ENCODE measurements at regions of chr1 and their contacts with region 1.

Region 1: DNA sequence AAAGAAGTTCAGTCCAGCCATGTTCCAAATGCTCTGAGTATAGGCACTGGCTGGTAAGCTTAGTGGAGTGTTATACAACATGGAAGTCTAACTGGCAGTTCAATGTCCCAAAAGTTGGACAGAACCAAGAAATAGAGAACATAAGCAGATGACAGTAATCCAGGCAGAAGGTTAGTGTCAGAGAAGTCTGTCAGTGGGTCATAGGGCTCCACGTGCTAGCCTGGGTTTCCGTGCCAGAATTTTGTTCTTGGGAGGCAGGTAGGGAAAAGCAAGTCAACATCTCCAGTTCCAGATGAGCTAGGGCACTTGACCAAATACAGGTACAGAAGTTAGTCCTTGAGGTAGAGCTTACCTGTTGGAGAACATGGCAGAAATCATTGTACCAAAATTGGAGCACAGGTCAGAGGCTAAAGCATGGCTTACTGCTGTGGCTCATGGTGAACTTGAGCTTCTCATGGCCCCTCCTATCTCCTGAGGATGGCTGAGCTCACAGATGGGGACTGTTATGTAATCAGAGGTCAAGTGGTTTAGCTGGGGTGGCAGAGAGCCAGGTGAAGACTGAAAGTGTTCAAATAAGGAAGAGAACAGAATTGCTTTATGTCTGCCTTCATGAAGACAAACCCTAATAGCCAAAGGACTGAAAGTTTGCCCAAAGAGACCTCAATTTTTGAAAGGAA is 170.8 kb downstream of the NFIA start:
- DNase-seq: peak; percentile 96
- H3K4me3 Mint-ChIP-seq: no peak overlapping the region
- H3K27ac Mint-ChIP-seq: peak overlapping the region; percentile 92
- H3K4me1 Mint-ChIP-seq: peaks cover 35% of the 10 kb centered on the region
- H3K27me3 Mint-ChIP-seq: no peaks in the 10 kb centered on the region
- CTCF ChIP-seq: no peak

Region 2: DNA sequence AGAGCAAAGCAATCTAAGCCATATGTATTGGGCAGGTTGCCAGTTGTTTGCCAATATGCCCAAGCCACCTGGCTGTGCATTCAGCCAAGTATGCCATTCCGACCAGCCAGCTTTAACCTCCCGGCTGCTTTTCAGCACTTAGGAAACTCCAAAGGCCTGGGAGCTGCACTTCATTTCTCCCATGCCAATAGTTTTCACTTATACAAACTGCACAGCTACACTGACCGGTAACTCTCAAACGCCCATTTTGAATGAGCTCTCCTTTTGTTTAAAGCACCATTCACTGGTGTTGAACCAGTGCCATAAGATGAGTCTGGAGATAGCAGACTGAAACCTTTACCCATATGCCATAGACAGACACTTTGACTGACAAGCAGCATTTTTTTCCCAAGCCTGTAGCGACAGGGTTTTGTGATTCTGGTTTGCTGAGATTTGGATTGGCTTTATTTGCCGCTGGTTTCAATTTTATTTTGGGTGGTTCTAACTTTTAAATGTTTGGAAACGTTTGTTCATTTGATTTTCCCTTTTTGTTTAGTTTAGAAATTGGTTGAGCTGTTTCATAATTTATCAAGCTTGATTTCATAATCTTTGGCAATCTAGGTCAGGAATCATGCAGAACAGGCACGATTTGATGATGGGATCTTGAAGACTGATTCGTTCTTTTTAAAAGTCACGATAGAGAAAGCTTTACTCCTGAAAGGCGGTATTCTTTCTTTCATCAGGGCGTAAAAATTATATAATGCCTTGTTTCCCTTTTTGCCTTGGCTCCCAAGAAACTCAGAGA is 26.2 kb before region 1 on chr1:
- CTCF ChIA-PET with region 1: no interaction called
- POLR2A ChIA-PET with region 1: interaction called, 26 read pairs
- intact Hi-C with region 1: no loop called
- DNase-seq: peak; percentile 95
- H3K4me3 Mint-ChIP-seq: peak overlapping the region; percentile 56
- H3K27ac Mint-ChIP-seq: peak overlapping the region; percentile 49
- H3K4me1 Mint-ChIP-seq: peaks cover 29% of the 10 kb centered on the region
- H3K27me3 Mint-ChIP-seq: no peaks in the 10 kb centered on the region
- CTCF ChIP-seq: no peak

Region 3: DNA sequence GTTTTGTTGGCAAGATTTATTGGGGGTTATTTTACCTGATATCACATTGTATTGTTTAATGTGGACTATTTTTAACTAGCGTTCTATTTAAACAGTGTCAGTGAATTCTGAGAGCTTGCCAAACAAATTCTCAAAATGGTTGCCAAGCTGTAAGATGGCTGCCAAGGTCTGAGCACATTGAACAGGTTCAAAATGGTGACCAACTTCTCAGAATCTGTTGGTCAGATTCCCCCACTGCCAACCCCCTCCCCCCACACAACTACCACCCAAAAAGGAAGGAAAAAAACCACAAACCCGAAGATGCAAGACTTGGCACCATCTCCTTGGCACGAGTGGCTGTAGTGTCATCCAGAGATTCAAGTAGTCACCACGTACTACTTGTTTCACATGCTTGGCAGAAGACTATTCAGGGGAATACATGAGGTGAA is 11.8 kb before region 1 on chr1:
- CTCF ChIA-PET with region 1: interaction called, 3 read pairs
- POLR2A ChIA-PET with region 1: interaction called, 12 read pairs
- intact Hi-C with region 1: no loop called
- DNase-seq: peak; percentile 56
- H3K4me3 Mint-ChIP-seq: no peak overlapping the region
- H3K27ac Mint-ChIP-seq: no peak overlapping the region
- H3K4me1 Mint-ChIP-seq: peaks cover 22% of the 10 kb centered on the region
- H3K27me3 Mint-ChIP-seq: no peaks in the 10 kb centered on the region
- CTCF ChIP-seq: no peak

Measured in MCF 10A (cell line).